Calu3 (cell line): ENCODE measurements at regions of chr1 and their contacts with region 1.

Region 1: GRCh38 chr1:73674945-73675561 is 522.9 kb downstream of the LRRIQ3 start:
- DNase-seq: no peak
- H3K4me3 Mint-ChIP-seq: no peak overlapping the region
- H3K27ac Mint-ChIP-seq: no peak overlapping the region
- H3K4me1 Mint-ChIP-seq: no peaks in the 10 kb centered on the region
- H3K27me3 Mint-ChIP-seq: no peaks in the 10 kb centered on the region
- CTCF ChIP-seq: peak; percentile 12

Region 2: DNA sequence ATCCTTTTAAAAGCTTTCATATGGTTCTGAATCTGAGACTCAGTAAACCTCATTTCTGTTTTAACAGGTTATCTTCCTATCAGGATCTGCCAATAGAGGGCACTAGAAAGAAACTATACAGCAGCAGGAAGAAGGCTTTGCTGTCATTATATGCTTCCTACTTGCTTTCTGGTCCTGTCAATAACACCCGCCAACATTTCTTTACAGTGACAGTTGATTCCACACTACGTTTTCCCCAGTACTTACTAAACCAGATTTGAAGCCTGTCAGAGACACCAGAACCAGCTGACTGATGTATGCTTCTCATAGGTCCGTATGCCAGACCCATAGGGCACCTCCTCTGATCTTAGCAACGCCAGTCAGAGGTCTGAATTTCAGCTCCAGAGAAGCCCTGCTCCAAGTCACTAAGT is 1051.7 kb before region 1 on chr1:
- CTCF ChIA-PET with region 1: no interaction called
- intact Hi-C with region 1: loop called (anchors 5 kb)
- DNase-seq: peak; percentile 9
- H3K4me3 Mint-ChIP-seq: peak overlapping the region; percentile 74
- H3K27ac Mint-ChIP-seq: peak overlapping the region; percentile 78
- H3K4me1 Mint-ChIP-seq: peaks cover 8% of the 10 kb centered on the region
- H3K27me3 Mint-ChIP-seq: no peaks in the 10 kb centered on the region
- CTCF ChIP-seq: peak; percentile 32

Region 3: GRCh38 chr1:73452522-73452921 is 222.5 kb before region 1 on chr1:
- CTCF ChIA-PET with region 1: no interaction called
- intact Hi-C with region 1: loop called (anchors 1 kb)
- DNase-seq: no peak
- H3K4me3 Mint-ChIP-seq: no peak overlapping the region
- H3K27ac Mint-ChIP-seq: no peak overlapping the region
- H3K4me1 Mint-ChIP-seq: no peaks in the 10 kb centered on the region
- H3K27me3 Mint-ChIP-seq: no peaks in the 10 kb centered on the region
- CTCF ChIP-seq: no peak

Region 4: DNA sequence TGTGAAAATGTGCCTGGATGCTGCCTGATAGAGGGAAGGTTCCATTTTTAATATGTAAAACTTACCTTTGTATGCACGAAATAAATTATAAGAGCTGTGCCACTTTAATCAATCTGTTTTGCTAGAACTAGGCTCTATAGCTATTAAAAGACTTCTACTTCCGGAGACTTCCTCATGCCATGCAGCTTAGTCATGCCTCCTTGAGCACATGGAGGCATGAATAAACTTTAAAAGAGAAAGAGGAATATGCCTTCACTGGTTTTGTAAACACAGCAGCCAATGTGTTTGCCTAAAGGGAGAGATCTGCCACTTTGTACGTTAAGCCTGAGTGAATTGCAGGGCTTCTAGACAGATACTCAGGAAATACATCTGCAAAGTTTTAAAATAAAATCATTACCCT is 81.7 kb before region 1 on chr1:
- CTCF ChIA-PET with region 1: no interaction called
- intact Hi-C with region 1: loop called (anchors 1 kb)
- DNase-seq: peak; percentile 58
- H3K4me3 Mint-ChIP-seq: peak overlapping the region; percentile 57
- H3K27ac Mint-ChIP-seq: peak overlapping the region; percentile 89
- H3K4me1 Mint-ChIP-seq: peaks cover 35% of the 10 kb centered on the region
- H3K27me3 Mint-ChIP-seq: no peaks in the 10 kb centered on the region
- CTCF ChIP-seq: no peak

Region 5: DNA sequence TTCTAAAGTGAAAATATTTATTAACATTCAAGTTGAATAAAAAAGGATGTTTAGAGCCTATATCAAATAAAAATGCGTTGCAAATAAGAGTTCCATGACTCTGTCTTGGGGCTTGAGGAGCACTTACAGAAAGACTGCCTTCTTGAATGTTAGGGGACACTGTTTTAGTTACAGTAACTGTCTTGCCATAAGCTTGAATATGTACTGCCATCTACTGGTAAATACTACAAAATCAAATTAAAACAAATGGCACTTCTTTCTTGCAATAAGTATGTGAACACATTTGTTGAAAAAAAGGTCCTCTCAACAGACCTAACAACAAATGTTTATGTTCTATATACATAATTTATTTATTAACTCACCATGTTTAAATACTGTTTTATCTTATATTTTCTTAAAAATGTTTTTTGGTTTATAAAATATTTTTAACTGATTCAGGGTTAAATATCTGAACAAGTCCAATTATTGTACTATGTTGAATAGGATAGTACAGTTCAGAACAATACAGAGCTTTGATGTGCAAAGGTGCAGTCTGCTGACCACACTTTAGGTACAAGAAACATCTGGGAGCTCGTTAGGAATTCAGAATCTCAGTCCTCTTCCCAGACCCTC is 323.4 kb after region 1 on chr1:
- CTCF ChIA-PET with region 1: no interaction called
- intact Hi-C with region 1: loop called (anchors 10 kb)
- DNase-seq: no peak
- H3K4me3 Mint-ChIP-seq: no peak overlapping the region
- H3K27ac Mint-ChIP-seq: peak overlapping the region; percentile 8
- H3K4me1 Mint-ChIP-seq: peaks cover 13% of the 10 kb centered on the region
- H3K27me3 Mint-ChIP-seq: no peaks in the 10 kb centered on the region
- CTCF ChIP-seq: peak; percentile 33

Region 6: GRCh38 chr1:75188892-75189291 is 1513.8 kb after region 1 on chr1:
- CTCF ChIA-PET with region 1: no interaction called
- intact Hi-C with region 1: no loop called
- DNase-seq: no peak
- H3K4me3 Mint-ChIP-seq: no peak overlapping the region
- H3K27ac Mint-ChIP-seq: no peak overlapping the region
- H3K4me1 Mint-ChIP-seq: no peaks in the 10 kb centered on the region
- H3K27me3 Mint-ChIP-seq: peaks cover 35% of the 10 kb centered on the region
- CTCF ChIP-seq: no peak